ENCODE measurements at regions of chr10 and their contacts with region 1.

Region 1: GRCh38 chr10:68901104-68901927 is at the start of gene DDX50:
- DNase-seq: peak; percentile 89 to 99
- ATAC-seq: peak; percentile 97 to 98
- H3K4me3 ChIP-seq: peak within 1 kb of the TSS; percentile 91
- H3K27ac ChIP-seq: peak within 1 kb of the TSS; percentile 95 to 96
- H3K4me1 ChIP-seq: peaks cover 9% of the 10 kb centered on the region; the same call in 2 of the 3 replicates
- CTCF ChIP-seq: no peak
- EP300 ChIP-seq: no peak
- POLR2A ChIP-seq: peak; percentile 83
- RAD21 ChIP-seq: no peak
- polyA plus RNA-seq, gene DDX50: 50.7 and 64.6 TPM in 2 replicates

Region 2: DNA sequence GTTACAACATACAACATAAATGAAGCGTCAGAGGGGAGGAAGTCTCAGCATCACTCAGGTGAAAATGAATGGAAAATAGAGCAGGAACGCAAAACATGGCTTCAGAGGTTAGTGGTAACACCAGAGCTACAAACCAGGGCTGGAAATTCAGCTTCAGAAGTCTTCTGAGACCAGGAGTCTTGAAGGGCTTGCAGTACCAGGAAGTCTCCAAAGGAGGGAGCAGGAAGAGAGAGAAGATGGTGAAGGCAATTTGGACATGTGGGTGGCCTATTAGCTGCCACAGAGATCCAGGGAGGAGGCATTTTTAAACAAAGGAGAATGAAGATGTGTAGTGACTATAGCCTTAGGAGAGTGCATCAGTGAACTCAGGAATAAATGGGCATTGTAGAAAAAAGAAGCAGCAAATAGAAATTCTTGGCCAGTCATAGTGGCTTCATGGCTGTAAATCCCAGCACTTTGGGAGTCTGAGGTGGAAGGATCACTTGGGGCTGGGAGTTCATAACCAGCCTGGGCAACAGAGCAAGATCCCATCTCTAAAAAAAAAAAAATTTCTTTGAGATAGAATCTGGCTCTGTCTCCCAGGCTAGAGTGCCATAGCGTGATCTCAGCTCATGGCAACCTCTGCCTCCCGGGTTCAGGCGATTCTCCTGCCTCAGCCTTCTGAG is 350.4 kb before region 1 on chr10:
- CTCF ChIA-PET with region 1: interaction called, 18 read pairs
- POLR2A ChIA-PET with region 1: interaction called, 4 read pairs
- DNase-seq: peak; percentile 70 to 86
- ATAC-seq: peak; percentile 89 to 91
- H3K4me3 ChIP-seq: no peak overlapping the region
- H3K27ac ChIP-seq: no peak overlapping the region
- H3K4me1 ChIP-seq: peaks cover 6% of the 10 kb centered on the region; the same call in 1 of the 3 replicates
- CTCF ChIP-seq: peak; percentile 50
- EP300 ChIP-seq: no peak
- POLR2A ChIP-seq: no peak
- RAD21 ChIP-seq: peak; percentile 57 to 70

Region 3: GRCh38 chr10:68594405-68594804 is 306.9 kb before region 1 on chr10:
- CTCF ChIA-PET with region 1: no interaction called
- POLR2A ChIA-PET with region 1: no interaction called
- DNase-seq: peak in 1 of 2 experiments; percentile 15
- ATAC-seq: peak in 1 of 2 experiments; percentile 51; a peak in 3 of 6 replicates
- H3K4me3 ChIP-seq: no peak overlapping the region
- H3K27ac ChIP-seq: 0 out of 6 replicates have a peak overlapping the region, but pooled peaks of 1 of the 2 experiments have one; percentile 2
- H3K4me1 ChIP-seq: peaks cover 10% of the 10 kb centered on the region
- CTCF ChIP-seq: no peak
- EP300 ChIP-seq: no peak
- POLR2A ChIP-seq: no peak
- RAD21 ChIP-seq: no peak

Region 4: GRCh38 chr10:68800196-68800595 is 101.1 kb before region 1 on chr10:
- CTCF ChIA-PET with region 1: interaction called, 13 read pairs
- POLR2A ChIA-PET with region 1: interaction called, 3 read pairs
- DNase-seq: no peak
- ATAC-seq: no peak
- H3K4me3 ChIP-seq: no peak overlapping the region
- H3K27ac ChIP-seq: no peak overlapping the region
- H3K4me1 ChIP-seq: no peaks in the 10 kb centered on the region
- CTCF ChIP-seq: no peak
- EP300 ChIP-seq: no peak
- POLR2A ChIP-seq: no peak
- RAD21 ChIP-seq: no peak

Region 5: GRCh38 chr10:68876246-68877138 is 24.8 kb before region 1 on chr10:
- CTCF ChIA-PET with region 1: interaction called, 10 read pairs
- POLR2A ChIA-PET with region 1: interaction called, 3 read pairs
- DNase-seq: no peak
- ATAC-seq: peak in 1 of 2 experiments; percentile 30; a peak in 1 of 6 replicates
- H3K4me3 ChIP-seq: no peak overlapping the region
- H3K27ac ChIP-seq: no peak overlapping the region
- H3K4me1 ChIP-seq: peaks cover 12% of the 10 kb centered on the region; the same call in 2 of the 3 replicates
- CTCF ChIP-seq: no peak
- EP300 ChIP-seq: no peak
- POLR2A ChIP-seq: no peak
- RAD21 ChIP-seq: no peak

Region 6: GRCh38 chr10:69168493-69168892 is 267.2 kb after region 1 on chr10:
- CTCF ChIA-PET with region 1: no interaction called
- POLR2A ChIA-PET with region 1: no interaction called
- DNase-seq: no peak
- ATAC-seq: no peak
- H3K4me3 ChIP-seq: no peak overlapping the region
- H3K27ac ChIP-seq: no peak overlapping the region
- H3K4me1 ChIP-seq: no peaks in the 10 kb centered on the region
- CTCF ChIP-seq: no peak
- EP300 ChIP-seq: no peak
- POLR2A ChIP-seq: no peak
- RAD21 ChIP-seq: no peak